ENCODE measurements at regions of chr5 and their contacts with region 1.

Region 1: GRCh38 chr5:33457126-33457525 is 16.4 kb downstream of the TARS1 start:
- DNase-seq: no peak
- H3K4me3 ChIP-seq: no peak overlapping the region
- H3K27ac ChIP-seq: no peak overlapping the region
- H3K4me1 ChIP-seq: no peaks in the 10 kb centered on the region
- H3K27me3 ChIP-seq: no peaks in the 10 kb centered on the region
- CTCF ChIP-seq: no peak
- POLR2A ChIP-seq: no peak

Region 2: GRCh38 chr5:33440482-33441240 is 16.5 kb before region 1 on chr5 and contains the start of gene TARS1:
- intact Hi-C with region 1: loop called (anchors 1 kb)
- DNase-seq: peak; percentile 98
- H3K4me3 ChIP-seq: peak within 1 kb of the TSS; percentile 67 to 83 (median 71)
- H3K27ac ChIP-seq: peak within 1 kb of the TSS; percentile 93 to 96
- H3K4me1 ChIP-seq: peaks cover 0 to 5% of the 10 kb centered on the region in 2 donors
- H3K27me3 ChIP-seq: no peaks in the 10 kb centered on the region
- CTCF ChIP-seq: peak in 1 of 3 donors; percentile 11
- POLR2A ChIP-seq: peak; percentile 38
- total RNA-seq, gene TARS1: 58.4 to 66.5 (median 64.2) TPM

Region 3: DNA sequence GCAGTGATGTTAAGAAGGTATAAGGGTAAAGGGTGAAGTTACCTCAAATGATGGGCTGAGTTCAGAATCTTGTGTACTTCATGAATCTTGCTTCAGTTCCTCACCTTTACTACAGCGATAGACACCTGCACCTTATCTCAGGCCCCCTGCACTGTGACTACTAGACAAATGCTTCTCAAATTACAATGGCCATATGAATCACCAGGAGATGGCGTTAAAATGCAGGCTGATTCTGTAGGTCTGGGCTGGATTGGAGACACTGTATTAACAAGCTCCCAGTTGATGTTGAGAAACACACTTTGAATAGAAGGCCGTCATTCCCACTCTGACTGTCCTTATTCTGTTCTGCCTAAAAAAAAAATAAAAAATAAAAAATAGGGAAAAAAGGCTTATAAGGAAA is 13.4 kb after region 1 on chr5:
- intact Hi-C with region 1: no loop called
- DNase-seq: no peak
- H3K4me3 ChIP-seq: no peak overlapping the region
- H3K27ac ChIP-seq: no peak overlapping the region
- H3K4me1 ChIP-seq: no peaks in the 10 kb centered on the region
- H3K27me3 ChIP-seq: no peaks in the 10 kb centered on the region
- CTCF ChIP-seq: peak in 2 of 3 donors; percentile 33 to 42
- POLR2A ChIP-seq: no peak

Region 4: GRCh38 chr5:33491941-33492340 is 34.8 kb after region 1 on chr5:
- intact Hi-C with region 1: no loop called
- DNase-seq: no peak
- H3K4me3 ChIP-seq: no peak overlapping the region
- H3K27ac ChIP-seq: no peak overlapping the region
- H3K4me1 ChIP-seq: no peaks in the 10 kb centered on the region
- H3K27me3 ChIP-seq: no peaks in the 10 kb centered on the region
- CTCF ChIP-seq: no peak
- POLR2A ChIP-seq: no peak

Region 5: DNA sequence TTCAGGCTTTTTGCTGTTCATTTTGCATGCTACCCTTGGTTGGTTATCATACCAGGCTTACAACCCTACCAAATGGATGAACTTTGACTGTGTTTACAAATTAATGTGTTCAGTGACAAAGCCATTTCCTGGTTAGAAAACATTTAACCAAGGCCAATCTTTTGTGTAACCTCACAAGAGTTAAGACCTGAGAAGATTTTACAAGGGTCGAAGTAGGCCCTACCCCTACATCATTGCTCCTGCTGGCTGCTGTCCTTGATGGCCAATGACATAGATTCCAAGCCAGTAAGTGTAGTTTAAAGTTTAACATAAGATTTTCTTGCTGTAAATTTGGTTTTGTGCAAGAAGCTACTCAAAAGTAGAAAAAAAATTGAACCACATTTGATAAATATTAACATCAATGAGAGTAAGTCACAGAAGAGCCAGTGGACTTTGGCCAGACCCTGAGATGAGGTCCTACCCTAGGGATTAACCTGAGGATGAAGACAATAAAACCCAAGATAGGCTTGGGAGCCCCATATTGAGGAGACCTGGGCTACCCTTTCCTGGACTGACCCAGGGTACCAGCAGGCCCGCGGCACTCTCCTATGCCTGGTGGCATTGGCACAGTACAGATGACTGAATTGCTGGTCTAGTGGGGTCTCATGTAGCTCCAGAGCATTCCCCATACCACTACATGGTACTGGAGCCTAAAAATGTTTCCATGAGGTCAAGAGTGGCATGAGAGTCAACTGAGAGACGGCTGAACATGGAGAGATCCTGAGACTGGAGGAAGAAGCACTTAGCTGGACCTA is 577.6 kb after region 1 on chr5:
- intact Hi-C with region 1: no loop called
- DNase-seq: no peak
- H3K4me3 ChIP-seq: no peak overlapping the region
- H3K27ac ChIP-seq: no peak overlapping the region
- H3K4me1 ChIP-seq: no peaks in the 10 kb centered on the region
- H3K27me3 ChIP-seq: no peaks in the 10 kb centered on the region
- CTCF ChIP-seq: no peak
- POLR2A ChIP-seq: no peak

Region 6: GRCh38 chr5:35136386-35136785 is 1679.3 kb after region 1 on chr5:
- intact Hi-C with region 1: no loop called
- DNase-seq: no peak
- H3K4me3 ChIP-seq: no peak overlapping the region
- H3K27ac ChIP-seq: no peak overlapping the region
- H3K4me1 ChIP-seq: no peaks in the 10 kb centered on the region
- H3K27me3 ChIP-seq: no peaks in the 10 kb centered on the region
- CTCF ChIP-seq: no peak
- POLR2A ChIP-seq: no peak